Sigmoid colon (tissue), 7 donors: ENCODE measurements at regions of chr7 and their contacts with region 1.

Region 1: GRCh38 chr7:139777948-139778841 is at the start of gene HIPK2:
- DNase-seq: peak; percentile 86
- H3K4me3 ChIP-seq: peak within 1 kb of the TSS; percentile 64 to 92 (median 90)
- H3K27ac ChIP-seq: peak within 1 kb of the TSS; percentile 89 to 95 (median 92)
- H3K4me1 ChIP-seq: peaks cover 0 to 21% (median 17%) of the 10 kb centered on the region in 4 donors
- H3K27me3 ChIP-seq: no peaks in the 10 kb centered on the region
- CTCF ChIP-seq: no peak
- EP300 ChIP-seq: no peak
- POLR2A ChIP-seq: no peak
- total RNA-seq, gene HIPK2: 7.8 to 11.6 (median 8.8) TPM

Region 2: DNA sequence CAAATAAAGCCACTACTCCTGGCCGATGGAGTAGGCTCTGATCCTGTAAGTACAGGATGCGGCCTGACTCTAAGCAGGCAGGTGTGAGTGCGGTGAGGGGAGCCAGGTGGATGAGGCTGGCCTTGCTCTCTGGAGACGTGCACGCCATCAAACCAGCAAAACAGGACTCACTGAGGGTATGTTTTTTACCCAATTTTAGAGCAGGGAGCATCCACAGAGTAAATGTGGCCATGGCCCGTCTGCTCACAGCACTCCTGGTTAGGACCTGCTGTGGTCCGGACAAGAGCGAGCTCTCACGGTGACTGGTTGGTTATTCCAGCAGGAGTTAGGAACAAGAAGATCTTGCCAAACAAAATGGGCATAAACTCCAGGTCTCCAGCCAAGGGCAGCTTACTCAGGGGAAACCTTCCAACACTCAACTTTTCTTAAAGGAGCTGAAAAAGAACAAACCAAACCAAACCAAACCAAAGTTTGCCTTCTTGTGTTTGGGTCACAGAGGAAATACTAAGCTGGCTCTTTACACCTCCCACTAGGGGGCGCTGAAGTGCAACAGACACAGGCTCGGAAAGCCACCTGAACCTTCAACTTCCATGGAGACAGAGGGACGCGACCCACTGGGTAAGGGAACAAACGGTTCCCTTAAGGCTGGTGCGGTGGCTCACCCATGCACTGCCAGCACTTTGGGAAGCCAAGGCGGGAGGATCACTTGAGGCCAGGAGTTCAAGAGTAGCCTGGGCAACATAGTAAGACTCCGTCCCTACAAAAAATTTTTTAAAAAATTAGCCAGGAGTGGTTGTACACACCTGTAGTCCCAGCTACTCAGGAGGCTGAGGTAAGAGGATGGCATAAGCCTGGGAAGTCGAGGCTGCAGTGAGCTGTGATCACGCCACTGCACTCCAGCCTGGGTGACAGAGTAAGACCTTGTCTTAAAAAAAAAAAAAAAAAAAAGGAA is 132.3 kb before region 1 on chr7:
- intact Hi-C with region 1: loop called (anchors 5 kb)
- DNase-seq: peak; percentile 86
- H3K4me3 ChIP-seq: no peak overlapping the region
- H3K27ac ChIP-seq: no peak overlapping the region
- H3K4me1 ChIP-seq: peaks cover 0 to 5% (median 0%) of the 10 kb centered on the region in 4 donors
- H3K27me3 ChIP-seq: no peaks in the 10 kb centered on the region
- CTCF ChIP-seq: peak; percentile 67 to 89 (median 80)
- EP300 ChIP-seq: no peak
- POLR2A ChIP-seq: no peak

Region 3: GRCh38 chr7:139731802-139732470 is 46.3 kb before region 1 on chr7:
- intact Hi-C with region 1: loop called (anchors 5 kb)
- DNase-seq: peak; percentile 93
- H3K4me3 ChIP-seq: no peak overlapping the region
- H3K27ac ChIP-seq: peak overlapping the region; percentile 56 to 78 (median 70)
- H3K4me1 ChIP-seq: peaks cover 0 to 48% (median 33%) of the 10 kb centered on the region in 4 donors
- H3K27me3 ChIP-seq: no peaks in the 10 kb centered on the region
- CTCF ChIP-seq: no peak
- EP300 ChIP-seq: peak in 1 of 4 donors; percentile 8
- POLR2A ChIP-seq: no peak

Region 4: DNA sequence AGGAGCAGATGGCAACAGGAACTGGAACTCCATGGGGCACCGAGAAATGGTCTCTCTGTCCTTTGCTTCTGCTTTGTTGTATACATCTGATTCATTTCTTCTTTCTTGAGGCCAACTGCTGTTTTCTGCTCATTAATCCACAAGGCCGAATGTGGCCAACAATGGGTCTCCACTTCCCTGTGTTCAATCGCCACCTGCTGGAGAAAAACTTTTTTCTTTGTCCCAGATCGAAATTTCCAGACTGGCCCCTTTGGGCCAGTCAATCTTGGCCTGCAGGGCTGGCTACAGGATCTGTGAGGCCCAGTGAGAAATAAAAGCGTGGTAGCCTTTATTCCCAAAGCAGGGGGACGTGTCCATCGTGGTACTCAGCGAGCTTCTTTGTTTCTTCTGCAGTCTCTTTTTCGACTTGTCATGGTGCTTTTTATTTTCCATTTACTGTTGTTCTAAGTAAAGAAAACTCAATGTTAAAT is 225.8 kb after region 1 on chr7:
- intact Hi-C with region 1: loop called (anchors 5 kb)
- DNase-seq: no peak
- H3K4me3 ChIP-seq: no peak overlapping the region
- H3K27ac ChIP-seq: no peak overlapping the region
- H3K4me1 ChIP-seq: no peaks in the 10 kb centered on the region
- H3K27me3 ChIP-seq: no peaks in the 10 kb centered on the region
- CTCF ChIP-seq: peak in 1 of 4 experiments; percentile 35
- EP300 ChIP-seq: no peak
- POLR2A ChIP-seq: no peak

Region 5: GRCh38 chr7:140062528-140063299 is 284.5 kb after region 1 on chr7 and contains the start of gene PARP12:
- intact Hi-C with region 1: loop called (anchors 5 kb)
- DNase-seq: peak; percentile 90
- H3K4me3 ChIP-seq: peak within 1 kb of the TSS; percentile 70 to 82 (median 72)
- H3K27ac ChIP-seq: peak within 1 kb of the TSS; percentile 88 to 91 (median 90)
- H3K4me1 ChIP-seq: peaks cover 0 to 36% (median 22%) of the 10 kb centered on the region in 4 donors
- H3K27me3 ChIP-seq: no peaks in the 10 kb centered on the region
- CTCF ChIP-seq: no peak
- EP300 ChIP-seq: no peak
- POLR2A ChIP-seq: peak in 1 of 2 donors; percentile 23
- total RNA-seq, gene PARP12: 20.6 to 29.9 (median 22.9) TPM

Region 6: GRCh38 chr7:140212100-140212891 is 434.1 kb after region 1 on chr7:
- intact Hi-C with region 1: no loop called
- DNase-seq: no peak
- H3K4me3 ChIP-seq: no peak overlapping the region
- H3K27ac ChIP-seq: no peak overlapping the region
- H3K4me1 ChIP-seq: peaks cover 0 to 8% (median 0%) of the 10 kb centered on the region in 4 donors
- H3K27me3 ChIP-seq: no peaks in the 10 kb centered on the region
- CTCF ChIP-seq: no peak
- EP300 ChIP-seq: no peak
- POLR2A ChIP-seq: no peak

Region 7: GRCh38 chr7:140326116-140326928 is 548.1 kb after region 1 on chr7:
- intact Hi-C with region 1: loop called (anchors 10 kb)
- DNase-seq: peak; percentile 87
- H3K4me3 ChIP-seq: peak overlapping the region in 2 of 4 donors; percentile 15 to 18
- H3K27ac ChIP-seq: peak overlapping the region; percentile 47 to 71 (median 56)
- H3K4me1 ChIP-seq: peaks cover 0 to 38% (median 24%) of the 10 kb centered on the region in 4 donors
- H3K27me3 ChIP-seq: no peaks in the 10 kb centered on the region
- CTCF ChIP-seq: peak; percentile 36 to 70 (median 65)
- EP300 ChIP-seq: no peak
- POLR2A ChIP-seq: no peak